HepG2 (cell line): ENCODE measurements at regions of chr12 and their contacts with region 1.

Region 1: GRCh38 chr12:114668151-114668885 is 15.7 kb downstream of the TBX3 start:
- DNase-seq: peak; percentile 93
- ATAC-seq: peak; percentile 89
- H3K4me3 ChIP-seq: peak overlapping the region; percentile 64 to 81 (median 79)
- H3K27ac ChIP-seq: peak overlapping the region; percentile 79
- H3K4me1 ChIP-seq: peaks cover 45% of the 10 kb centered on the region
- H3K27me3 ChIP-seq: no peaks in the 10 kb centered on the region
- CTCF ChIP-seq: peak; percentile 90
- EP300 ChIP-seq: 0 out of 4 replicates have a peak, but pooled peaks of 1 of the 2 experiments have one; percentile 18
- POLR2A ChIP-seq: peak in 1 of 2 experiments; percentile 29; a peak in 1 of 4 replicates
- RAD21 ChIP-seq: peak; percentile 96

Region 2: GRCh38 chr12:114238781-114239180 is 429.5 kb before region 1 on chr12:
- CTCF ChIA-PET with region 1: no interaction called
- POLR2A ChIA-PET with region 1: no interaction called
- in situ Hi-C with region 1: no loop called
- intact Hi-C with region 1: no loop called
- DNase-seq: no peak
- ATAC-seq: no peak
- H3K4me3 ChIP-seq: no peak overlapping the region
- H3K27ac ChIP-seq: no peak overlapping the region
- H3K4me1 ChIP-seq: no peaks in the 10 kb centered on the region
- H3K27me3 ChIP-seq: no peaks in the 10 kb centered on the region
- CTCF ChIP-seq: no peak
- EP300 ChIP-seq: no peak
- POLR2A ChIP-seq: no peak
- RAD21 ChIP-seq: no peak

Region 3: GRCh38 chr12:114655934-114656749 is 12.2 kb before region 1 on chr12:
- CTCF ChIA-PET with region 1: no interaction called
- POLR2A ChIA-PET with region 1: interaction called, 16 read pairs
- in situ Hi-C with region 1: no loop called
- intact Hi-C with region 1: no loop called
- DNase-seq: peak; percentile 98
- ATAC-seq: peak; percentile 92
- H3K4me3 ChIP-seq: peak overlapping the region in 2 of 3 experiments; percentile 14 to 50; a peak in 2 of 6 replicates
- H3K27ac ChIP-seq: peak overlapping the region; percentile 97
- H3K4me1 ChIP-seq: peaks cover 63% of the 10 kb centered on the region
- H3K27me3 ChIP-seq: no peaks in the 10 kb centered on the region
- CTCF ChIP-seq: 0 out of 2 replicates have a peak, but pooled peaks have one; percentile 25
- EP300 ChIP-seq: peak; percentile 72 to 99; a peak in 3 of 4 replicates
- POLR2A ChIP-seq: peak in 1 of 2 experiments; percentile 46; a peak in 1 of 4 replicates
- RAD21 ChIP-seq: no peak

Region 4: DNA sequence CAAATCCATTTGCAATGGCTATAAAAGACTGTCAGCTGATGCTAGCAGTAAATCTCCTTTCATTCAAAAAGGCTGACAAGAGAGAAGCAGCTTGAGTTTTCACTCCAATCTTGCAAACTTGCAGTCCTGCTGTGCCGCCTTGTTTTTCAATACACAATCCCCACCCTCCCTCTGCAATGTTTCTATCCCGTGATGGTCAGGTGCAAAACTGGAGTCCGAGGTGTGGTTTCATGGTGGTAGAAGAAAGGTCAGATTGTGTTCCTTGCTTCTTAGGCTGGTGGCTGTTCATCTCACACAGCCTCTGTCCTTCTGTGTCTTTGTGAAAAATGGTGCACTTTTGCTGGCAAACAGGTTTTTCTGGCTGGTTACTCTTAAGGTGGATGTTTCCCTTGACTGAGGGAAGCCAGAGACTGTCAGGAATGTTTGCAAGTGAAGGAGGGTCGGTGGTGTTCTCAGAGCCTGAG is 43.4 kb after region 1 on chr12:
- CTCF ChIA-PET with region 1: no interaction called
- POLR2A ChIA-PET with region 1: no interaction called
- in situ Hi-C with region 1: no loop called
- intact Hi-C with region 1: no loop called
- DNase-seq: no peak
- ATAC-seq: no peak
- H3K4me3 ChIP-seq: no peak overlapping the region
- H3K27ac ChIP-seq: no peak overlapping the region
- H3K4me1 ChIP-seq: peaks cover 14% of the 10 kb centered on the region
- H3K27me3 ChIP-seq: no peaks in the 10 kb centered on the region
- CTCF ChIP-seq: no peak
- EP300 ChIP-seq: no peak
- POLR2A ChIP-seq: no peak
- RAD21 ChIP-seq: no peak

Region 5: DNA sequence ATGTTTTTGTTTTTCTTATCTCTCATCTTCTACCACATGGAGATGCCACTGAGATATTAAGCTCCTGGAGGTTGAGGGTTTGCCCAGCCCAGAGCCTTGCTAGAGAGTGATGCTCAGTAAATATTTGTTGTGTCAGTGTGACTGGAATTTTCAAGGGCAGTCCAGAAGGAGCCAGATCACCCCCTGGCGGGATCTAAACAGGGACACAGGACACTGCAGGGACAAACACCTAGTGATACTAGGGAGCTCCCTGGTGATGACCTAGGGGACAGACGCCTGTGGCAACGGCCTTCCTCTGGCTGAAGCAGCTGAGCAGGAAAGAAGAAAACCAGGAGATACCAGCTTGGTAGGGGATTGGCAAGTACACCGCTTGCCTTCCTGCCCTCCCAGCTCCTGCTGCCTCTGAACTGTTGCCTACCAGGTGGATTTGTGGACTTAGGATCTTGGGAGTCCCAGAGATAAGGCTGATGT is 730.0 kb after region 1 on chr12:
- CTCF ChIA-PET with region 1: interaction called, 23 read pairs
- POLR2A ChIA-PET with region 1: interaction called, 20 read pairs
- in situ Hi-C with region 1: loop called (anchors 5 kb)
- intact Hi-C with region 1: loop called (anchors 1 kb)
- DNase-seq: peak; percentile 92
- ATAC-seq: peak; percentile 100
- H3K4me3 ChIP-seq: no peak overlapping the region
- H3K27ac ChIP-seq: peak overlapping the region; percentile 30
- H3K4me1 ChIP-seq: peaks cover 57% of the 10 kb centered on the region
- H3K27me3 ChIP-seq: no peaks in the 10 kb centered on the region
- CTCF ChIP-seq: peak; percentile 96
- EP300 ChIP-seq: peak in 1 of 2 experiments; percentile 62; a peak in 2 of 4 replicates
- POLR2A ChIP-seq: no peak
- RAD21 ChIP-seq: peak; percentile 97

Region 6: DNA sequence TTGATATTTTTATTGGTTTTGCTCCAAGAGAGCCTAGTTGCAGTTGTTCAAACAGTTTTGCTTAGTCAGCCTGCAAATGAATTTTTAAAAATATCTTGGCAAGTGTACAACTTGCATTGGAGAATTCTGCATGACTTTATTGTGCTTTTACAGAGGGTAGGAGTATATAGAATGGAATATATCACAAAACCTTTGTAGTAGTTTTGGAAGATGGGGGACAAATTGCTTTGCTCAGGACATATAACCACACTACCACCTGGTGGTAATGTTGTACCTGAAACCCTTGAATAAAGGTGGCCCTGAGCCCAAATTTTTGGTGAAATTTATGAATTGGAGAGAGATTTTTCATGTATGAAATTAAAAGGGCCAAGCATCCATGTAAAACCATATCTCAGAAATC is 964.0 kb after region 1 on chr12:
- CTCF ChIA-PET with region 1: interaction called, 3 read pairs
- POLR2A ChIA-PET with region 1: no interaction called
- in situ Hi-C with region 1: loop called (anchors 10 kb)
- intact Hi-C with region 1: loop called (anchors 5 kb)
- DNase-seq: no peak
- ATAC-seq: no peak
- H3K4me3 ChIP-seq: no peak overlapping the region
- H3K27ac ChIP-seq: no peak overlapping the region
- H3K4me1 ChIP-seq: no peaks in the 10 kb centered on the region
- H3K27me3 ChIP-seq: no peaks in the 10 kb centered on the region; a peak in 2 of 5 replicates
- CTCF ChIP-seq: no peak
- EP300 ChIP-seq: no peak
- POLR2A ChIP-seq: no peak
- RAD21 ChIP-seq: no peak

Region 7: GRCh38 chr12:115771065-115771464 is 1102.7 kb after region 1 on chr12:
- CTCF ChIA-PET with region 1: no interaction called
- POLR2A ChIA-PET with region 1: no interaction called
- in situ Hi-C with region 1: no loop called
- intact Hi-C with region 1: loop called (anchors 5 kb)
- DNase-seq: peak; percentile 33
- ATAC-seq: peak; percentile 73
- H3K4me3 ChIP-seq: no peak overlapping the region
- H3K27ac ChIP-seq: no peak overlapping the region
- H3K4me1 ChIP-seq: peaks cover 12% of the 10 kb centered on the region
- H3K27me3 ChIP-seq: no peaks in the 10 kb centered on the region
- CTCF ChIP-seq: peak; percentile 67
- EP300 ChIP-seq: no peak
- POLR2A ChIP-seq: no peak
- RAD21 ChIP-seq: 0 out of 2 replicates have a peak, but pooled peaks have one; percentile 39